Colonic mucosa (tissue), 4 donors: ENCODE measurements at regions of chr9 and their contacts with region 1.

Region 1: DNA sequence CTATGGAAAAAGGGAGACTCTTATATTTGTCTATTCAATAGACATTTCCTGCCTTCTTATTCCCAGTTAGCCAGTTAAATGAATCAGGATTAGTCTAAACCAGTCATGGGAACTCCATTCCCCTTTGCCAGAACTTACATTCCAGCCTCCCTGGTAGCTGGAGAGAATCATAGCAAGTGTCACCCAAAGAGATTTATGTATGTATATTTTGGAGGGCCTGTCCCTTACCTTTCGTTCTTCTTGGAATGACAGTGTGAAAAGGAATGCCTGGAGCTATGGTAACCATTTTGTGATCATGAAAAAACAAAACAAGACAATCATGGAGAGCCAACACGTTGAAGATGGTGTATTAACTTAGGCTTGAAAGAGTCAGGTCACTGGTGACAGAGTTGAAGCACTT is 627.7 kb downstream of the CCDC171 start:
- DNase-seq: no peak
- H3K4me3 ChIP-seq: no peak overlapping the region
- H3K27ac ChIP-seq: no peak overlapping the region
- H3K4me1 ChIP-seq: no peaks in the 10 kb centered on the region
- H3K27me3 ChIP-seq: no peaks in the 10 kb centered on the region
- CTCF ChIP-seq: no peak

Region 2: DNA sequence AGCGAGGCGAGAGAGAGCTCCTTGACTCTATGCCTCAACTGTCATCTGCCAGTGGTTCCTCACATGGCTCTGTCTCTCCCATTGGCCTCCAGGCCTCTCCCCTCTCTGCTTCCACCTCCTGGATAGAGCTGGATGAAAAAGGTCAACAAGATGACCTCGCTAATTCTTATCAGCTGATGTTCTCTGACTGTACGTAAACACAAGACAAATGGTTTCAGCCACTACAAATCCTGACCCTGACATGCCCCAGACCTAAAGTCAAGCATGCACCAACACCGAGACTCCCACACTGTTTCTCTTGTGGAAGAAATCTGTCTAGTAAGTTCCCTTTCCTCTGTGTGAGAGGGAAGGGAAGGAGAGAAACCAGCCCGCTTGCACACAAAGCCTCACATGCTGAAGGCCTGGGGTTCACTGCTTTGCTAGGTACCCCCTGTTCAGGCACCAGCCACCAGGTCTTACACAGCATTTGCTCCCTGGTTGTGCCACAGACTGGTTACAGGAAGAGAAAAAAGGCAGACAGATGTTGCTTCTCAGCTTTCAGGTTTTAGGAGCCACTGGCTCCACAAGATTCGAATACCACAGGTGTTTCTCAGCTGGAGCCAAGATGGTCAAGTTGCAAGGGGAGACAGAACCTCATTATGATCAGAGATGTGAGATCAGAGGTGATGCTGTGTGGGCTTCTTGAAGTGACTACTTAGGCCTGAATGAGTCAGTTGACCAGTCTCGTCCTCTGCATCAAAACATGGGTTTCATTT is 35.2 kb before region 1 on chr9:
- intact Hi-C with region 1: loop called (anchors 5 kb)
- DNase-seq: no peak
- H3K4me3 ChIP-seq: no peak overlapping the region
- H3K27ac ChIP-seq: no peak overlapping the region
- H3K4me1 ChIP-seq: no peaks in the 10 kb centered on the region
- H3K27me3 ChIP-seq: no peaks in the 10 kb centered on the region
- CTCF ChIP-seq: no peak

Region 3: GRCh38 chr9:16705121-16705604 is 524.6 kb after region 1 on chr9:
- intact Hi-C with region 1: loop called (anchors 10 kb)
- DNase-seq: peak; percentile 42
- H3K4me3 ChIP-seq: no peak overlapping the region
- H3K27ac ChIP-seq: peak overlapping the region; percentile 65
- H3K4me1 ChIP-seq: no peaks in the 10 kb centered on the region
- H3K27me3 ChIP-seq: no peaks in the 10 kb centered on the region
- CTCF ChIP-seq: no peak